ENCODE measurements at regions of chr22 and their contacts with region 1.

Region 1: GRCh38 chr22:18075720-18076497 is 1.9 kb upstream of the PEX26 start:
- DNase-seq: peak; percentile 79

Region 2: GRCh38 chr22:17742527-17742902 is 333.4 kb before region 1 on chr22:
- CTCF ChIA-PET with region 1: interaction called, 19 read pairs
- POLR2A ChIA-PET with region 1: interaction called, 4 read pairs
- DNase-seq: peak; percentile 95

Region 3: GRCh38 chr22:17830043-17830961 is 245.6 kb before region 1 on chr22:
- CTCF ChIA-PET with region 1: interaction called, 38 read pairs
- POLR2A ChIA-PET with region 1: interaction called, 7 read pairs
- DNase-seq: peak; percentile 95

Region 4: DNA sequence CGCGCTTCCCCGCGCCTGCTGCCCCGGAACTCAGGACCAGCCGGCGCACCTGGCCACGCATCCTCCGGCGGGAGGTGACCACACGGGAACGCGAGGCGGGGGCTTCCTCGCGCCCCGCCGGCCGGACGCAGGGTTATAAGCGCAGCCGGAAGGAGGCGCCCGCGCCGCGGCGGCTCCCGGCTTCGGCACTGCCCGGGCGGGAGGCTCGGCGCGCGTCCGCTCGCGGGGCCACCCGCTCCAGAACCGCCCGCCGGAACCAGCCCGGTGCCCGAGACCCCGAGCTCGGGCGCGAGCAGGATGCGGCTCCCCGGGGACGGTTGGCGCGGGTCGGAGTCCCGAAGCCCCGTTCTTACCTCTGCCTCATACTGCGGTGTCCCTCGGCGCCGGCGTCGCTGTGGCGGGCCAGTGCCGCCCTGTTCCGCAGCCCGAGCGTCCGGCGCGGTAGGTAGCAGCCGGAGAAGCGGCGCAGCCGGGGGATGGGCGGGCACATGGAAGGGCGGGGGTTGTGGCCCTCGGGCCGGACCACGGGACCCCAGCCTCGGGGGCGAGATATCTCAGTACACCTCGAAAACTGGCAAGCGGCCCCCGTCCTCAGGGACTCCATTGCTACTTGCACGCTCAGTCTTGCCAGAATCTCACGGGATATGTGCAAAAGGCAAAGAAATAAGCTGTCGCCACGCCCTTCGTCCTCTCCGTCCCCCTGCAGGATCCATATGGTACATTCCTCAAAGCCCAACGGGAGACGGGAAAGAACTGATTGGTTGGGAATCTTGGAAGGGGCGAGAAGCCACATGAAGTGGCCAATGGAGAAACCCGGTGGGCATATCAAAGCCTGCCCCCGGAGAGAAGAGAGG is 74.6 kb before region 1 on chr22:
- CTCF ChIA-PET with region 1: interaction called, 10 read pairs
- POLR2A ChIA-PET with region 1: interaction called, 7 read pairs
- DNase-seq: peak; percentile 98

Region 5: DNA sequence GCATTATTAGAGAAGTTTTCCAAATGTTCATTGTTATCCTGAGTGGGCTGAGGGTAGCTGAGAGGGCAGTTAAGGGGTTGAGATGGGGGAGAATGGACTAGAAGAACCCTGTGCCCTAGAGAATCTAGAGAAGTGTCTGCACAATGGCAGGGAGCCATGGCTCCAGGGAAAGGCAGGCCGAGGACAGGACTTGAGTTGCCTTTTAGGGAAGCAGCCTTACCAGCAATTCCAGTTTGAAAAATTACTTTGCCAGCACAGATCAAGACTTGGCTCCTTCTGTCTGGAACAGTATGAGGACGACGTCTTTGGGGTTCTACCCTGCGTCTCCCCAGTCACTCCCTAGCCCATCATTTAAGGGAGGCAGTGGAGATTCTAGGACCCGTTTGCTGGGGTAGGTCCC is 25.8 kb before region 1 on chr22:
- CTCF ChIA-PET with region 1: no interaction called
- POLR2A ChIA-PET with region 1: no interaction called
- DNase-seq: no peak

Region 6: GRCh38 chr22:18065256-18065655 is 10.7 kb before region 1 on chr22:
- CTCF ChIA-PET with region 1: interaction called, 18 read pairs
- POLR2A ChIA-PET with region 1: interaction called, 4 read pairs
- DNase-seq: no peak

Measured in HEK293T (cell line).